Endothelial cell of umbilical vein (primary cell): ENCODE measurements at regions of chr11 and their contacts with region 1.

Region 1: DNA sequence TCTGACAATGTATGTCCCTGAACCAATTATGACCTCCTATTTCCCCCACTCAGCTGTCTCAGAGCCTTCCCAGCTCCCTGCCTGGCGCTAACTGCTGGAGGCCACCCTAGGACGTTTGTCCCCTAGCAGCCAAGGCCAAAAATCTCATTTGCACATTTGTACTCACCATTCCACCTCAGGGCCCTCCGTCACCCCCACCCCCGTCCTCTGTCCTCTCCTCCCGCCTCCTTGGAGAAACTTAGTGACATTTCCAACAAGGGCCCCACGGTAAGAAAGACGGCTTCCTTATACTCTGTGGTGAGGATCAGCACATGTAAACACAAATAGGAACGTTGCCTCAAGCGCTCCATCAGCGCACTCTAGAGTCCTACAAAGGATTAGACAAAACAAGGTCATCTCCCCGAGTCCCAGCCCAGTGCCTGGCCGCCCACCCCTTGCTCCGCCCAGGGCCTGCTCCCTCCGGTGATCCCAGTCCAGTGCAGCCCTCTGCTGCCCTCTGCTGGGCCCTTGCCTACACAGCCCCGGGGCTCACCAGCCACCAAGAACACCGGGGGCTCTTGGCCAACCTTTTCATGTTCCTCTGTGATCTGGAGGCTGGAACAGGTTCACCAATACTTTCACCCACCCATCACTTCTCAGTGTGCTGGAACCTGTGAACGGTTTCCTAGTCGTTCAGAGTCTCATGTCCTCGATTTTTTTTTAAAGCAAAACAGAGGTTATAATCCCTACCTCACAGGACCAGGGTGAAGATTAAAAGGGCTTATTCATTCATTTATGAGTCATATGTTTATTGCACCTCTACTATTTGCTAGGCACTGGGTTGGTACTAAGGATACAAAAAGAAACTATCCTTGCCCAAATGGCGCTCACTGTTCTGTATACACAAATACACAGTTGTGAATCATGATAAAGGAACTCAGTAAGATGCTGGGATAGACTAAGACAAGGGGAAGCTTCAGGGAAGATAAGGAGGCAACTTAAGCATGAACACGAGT is 15.3 kb upstream of the CTR9 start:
- DNase-seq: peak; percentile 92
- H3K4me3 ChIP-seq: no peak overlapping the region
- H3K27ac ChIP-seq: peak overlapping the region; percentile 41
- H3K4me1 ChIP-seq: peaks cover 10% of the 10 kb centered on the region
- H3K27me3 ChIP-seq: no peaks in the 10 kb centered on the region
- CTCF ChIP-seq: peak; percentile 98
- POLR2A ChIP-seq: no peak

Region 2: DNA sequence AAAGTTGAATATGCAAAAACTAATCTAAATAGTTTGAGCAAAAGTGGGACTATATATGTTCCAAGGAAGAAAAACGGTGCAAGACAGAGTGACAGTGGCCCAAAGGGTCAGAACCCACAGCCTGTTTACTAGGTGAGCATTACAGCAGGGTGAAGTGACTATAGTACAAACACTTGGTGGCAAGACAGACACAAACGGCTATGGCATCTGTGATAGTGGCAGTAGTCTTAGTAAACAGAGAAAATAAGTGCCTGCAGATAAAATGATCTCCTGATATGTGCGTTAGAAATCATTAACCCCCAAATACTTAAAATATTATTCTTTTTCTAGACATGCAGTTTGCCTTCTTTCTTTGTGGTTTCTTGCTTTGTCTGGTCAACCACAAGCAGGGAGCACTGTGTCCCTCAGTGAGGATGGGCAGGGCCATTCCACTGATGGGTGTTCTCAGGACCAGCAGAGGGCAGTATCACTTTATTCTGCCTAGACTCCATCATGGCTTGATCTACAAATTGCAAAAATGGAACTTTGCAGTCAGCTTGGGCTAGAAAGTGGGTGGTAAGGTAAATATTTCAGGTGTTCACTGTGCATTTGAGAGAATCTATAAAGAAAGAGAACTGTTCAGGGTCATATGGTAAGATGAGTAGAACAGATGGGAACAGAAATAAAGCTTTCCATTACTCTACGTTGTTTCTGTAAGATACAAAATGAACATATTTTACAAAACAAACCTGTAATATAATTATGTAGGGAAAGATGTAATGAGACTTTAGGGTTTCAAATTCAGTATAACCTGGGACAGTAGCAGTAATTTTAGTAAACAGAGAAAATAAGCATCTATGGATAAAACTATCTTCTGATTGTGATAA is 873.7 kb before region 1 on chr11:
- CTCF ChIA-PET with region 1: no interaction called
- POLR2A ChIA-PET with region 1: no interaction called
- dilution Hi-C with region 1: no loop called
- intact Hi-C with region 1: loop called (anchors 2 kb)
- DNase-seq: peak; percentile 74
- H3K4me3 ChIP-seq: no peak overlapping the region
- H3K27ac ChIP-seq: no peak overlapping the region
- H3K4me1 ChIP-seq: peaks cover 40% of the 10 kb centered on the region
- H3K27me3 ChIP-seq: no peaks in the 10 kb centered on the region
- CTCF ChIP-seq: peak; percentile 66 to 74
- POLR2A ChIP-seq: no peak

Region 3: DNA sequence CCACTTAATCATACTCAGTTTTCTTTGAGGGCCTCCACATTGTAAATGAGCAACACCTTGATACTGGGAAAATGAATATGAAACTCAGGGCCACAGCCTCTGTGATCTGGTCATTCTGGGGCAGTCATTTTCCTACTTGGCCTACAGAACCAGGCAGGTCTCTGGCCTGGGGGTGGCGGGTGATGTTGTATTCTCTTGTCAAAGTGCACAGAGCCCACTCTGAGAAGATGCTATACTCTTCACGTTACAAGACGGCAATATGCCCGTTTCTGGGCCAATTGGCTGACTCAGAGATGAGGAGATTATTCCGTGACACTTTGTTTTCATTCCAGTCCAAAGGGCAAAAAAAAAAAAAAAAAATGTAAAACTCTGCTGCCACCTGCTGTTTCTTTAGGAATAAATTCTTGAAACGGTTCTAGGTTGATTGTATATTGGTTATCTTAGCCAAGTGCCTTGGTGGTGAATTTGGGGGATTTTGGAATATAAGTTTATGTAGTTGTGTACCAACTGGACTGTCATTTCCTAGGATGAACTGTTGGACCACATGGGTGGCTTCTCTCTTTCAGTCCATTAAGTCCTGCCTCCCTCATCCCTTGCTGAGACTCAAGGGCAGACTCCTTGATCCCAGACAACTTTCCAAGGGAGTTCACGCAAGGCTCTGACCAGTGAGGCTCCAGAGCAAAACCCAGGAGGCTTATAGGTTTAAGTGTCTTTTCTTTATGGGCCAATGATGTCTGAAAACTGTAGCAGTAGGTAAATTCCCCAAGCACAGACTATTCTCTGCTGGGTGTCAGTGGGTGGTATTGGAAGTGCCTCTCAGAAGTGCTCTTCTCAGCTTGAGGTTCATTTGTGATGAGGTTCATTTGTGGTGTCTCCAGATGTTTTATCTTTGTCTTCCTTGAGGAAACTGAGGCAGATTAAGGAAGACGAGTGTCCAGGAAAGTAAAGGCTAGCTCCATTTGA is 412.7 kb before region 1 on chr11:
- CTCF ChIA-PET with region 1: interaction called, 6 read pairs
- POLR2A ChIA-PET with region 1: interaction called, 4 read pairs
- dilution Hi-C with region 1: no loop called
- intact Hi-C with region 1: loop called (anchors 1 kb)
- DNase-seq: peak; percentile 92
- H3K4me3 ChIP-seq: no peak overlapping the region
- H3K27ac ChIP-seq: peak overlapping the region; percentile 28
- H3K4me1 ChIP-seq: peaks cover 57% of the 10 kb centered on the region
- H3K27me3 ChIP-seq: no peaks in the 10 kb centered on the region
- CTCF ChIP-seq: peak; percentile 28 to 46
- POLR2A ChIP-seq: no peak

Region 4: GRCh38 chr11:10405855-10406592 is 329.8 kb before region 1 on chr11:
- CTCF ChIA-PET with region 1: interaction called, 39 read pairs
- POLR2A ChIA-PET with region 1: no interaction called
- dilution Hi-C with region 1: no loop called
- intact Hi-C with region 1: loop called (anchors 1 kb)
- DNase-seq: peak; percentile 89
- H3K4me3 ChIP-seq: no peak overlapping the region
- H3K27ac ChIP-seq: no peak overlapping the region
- H3K4me1 ChIP-seq: peaks cover 26% of the 10 kb centered on the region
- H3K27me3 ChIP-seq: no peaks in the 10 kb centered on the region
- CTCF ChIP-seq: peak; percentile 56 to 73
- POLR2A ChIP-seq: no peak

Region 5: DNA sequence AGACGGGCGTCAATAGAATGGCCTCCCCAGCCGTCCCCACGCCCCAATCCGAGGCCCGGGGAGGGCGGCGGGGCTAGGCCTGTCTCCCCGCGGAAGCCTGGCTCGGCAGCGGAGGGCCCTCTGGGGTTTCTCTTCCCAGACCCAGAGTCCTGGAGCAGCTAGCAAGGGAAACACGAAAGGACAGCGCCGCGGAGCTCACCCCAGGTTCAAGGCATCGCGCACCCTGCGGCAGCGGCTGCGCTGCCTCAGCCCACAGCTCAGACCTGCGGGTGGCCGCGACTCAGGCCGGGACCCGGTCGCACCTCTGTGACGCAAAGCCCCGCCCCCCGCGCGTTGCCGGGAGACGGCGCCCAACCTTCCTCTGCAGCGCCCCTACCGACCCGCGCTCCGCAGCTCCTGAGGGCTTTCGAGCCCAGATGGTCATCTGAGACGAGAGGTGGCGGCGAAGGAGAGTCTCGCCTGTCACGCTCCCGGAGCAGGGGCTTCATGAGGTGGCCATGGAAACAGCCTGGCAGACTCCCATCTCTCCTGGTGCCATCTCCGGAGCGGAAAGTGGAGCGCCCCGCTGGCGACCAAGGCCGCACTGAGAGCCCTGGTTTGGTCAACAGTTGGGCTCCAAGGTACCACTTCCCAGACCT is 194.7 kb before region 1 on chr11 and contains the start of gene RNF141:
- CTCF ChIA-PET with region 1: interaction called, 10 read pairs
- POLR2A ChIA-PET with region 1: no interaction called
- dilution Hi-C with region 1: no loop called
- intact Hi-C with region 1: no loop called
- DNase-seq: peak; percentile 94
- H3K4me3 ChIP-seq: peak within 1 kb of the TSS; percentile 37 to 83 (median 59)
- H3K27ac ChIP-seq: peak within 1 kb of the TSS; percentile 57
- H3K4me1 ChIP-seq: peaks cover 10% of the 10 kb centered on the region
- H3K27me3 ChIP-seq: no peaks in the 10 kb centered on the region
- CTCF ChIP-seq: peak; percentile 87 to 93
- POLR2A ChIP-seq: peak; percentile 94
- total RNA-seq, gene RNF141: 31.8 and 32.4 TPM in 2 replicates

Region 6: DNA sequence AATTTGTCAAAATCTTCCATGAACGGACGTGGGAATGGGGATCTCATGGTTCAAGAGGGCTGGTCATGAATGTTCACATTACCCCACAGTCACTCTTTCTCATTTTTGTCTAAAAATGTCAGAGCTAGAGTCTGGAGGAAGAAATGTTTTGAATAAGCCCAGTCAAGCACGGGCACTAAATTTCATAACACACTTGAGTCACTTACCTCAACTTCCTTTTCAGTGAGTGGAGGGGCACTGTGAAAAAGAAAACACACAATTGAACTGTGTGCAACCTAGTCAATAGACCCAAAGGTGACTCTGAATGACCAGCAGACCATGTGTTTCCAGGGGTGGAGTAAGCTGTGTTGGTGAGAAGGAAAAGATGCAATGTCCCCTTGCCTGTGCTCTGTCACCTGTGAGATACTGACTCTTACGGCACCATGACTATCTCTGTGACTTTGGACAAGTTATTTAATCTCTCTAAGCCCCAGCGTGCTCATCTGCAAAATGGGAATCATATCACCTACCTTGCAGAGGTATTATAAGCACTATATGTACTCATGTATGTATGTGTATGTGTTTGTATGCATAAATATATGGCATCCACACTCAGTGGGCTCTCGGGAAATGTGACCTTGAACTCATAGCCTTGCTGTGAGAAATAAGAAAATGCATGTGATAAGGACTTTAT is 129.1 kb before region 1 on chr11:
- CTCF ChIA-PET with region 1: no interaction called
- POLR2A ChIA-PET with region 1: no interaction called
- dilution Hi-C with region 1: no loop called
- intact Hi-C with region 1: no loop called
- DNase-seq: peak; percentile 79
- H3K4me3 ChIP-seq: no peak overlapping the region
- H3K27ac ChIP-seq: peak overlapping the region; percentile 25
- H3K4me1 ChIP-seq: peaks cover 29% of the 10 kb centered on the region
- H3K27me3 ChIP-seq: peaks cover 0 to 1% of the 10 kb centered on the region in 2 experiments
- CTCF ChIP-seq: no peak
- POLR2A ChIP-seq: no peak

Region 7: GRCh38 chr11:10659339-10660216 is 76.2 kb before region 1 on chr11:
- CTCF ChIA-PET with region 1: interaction called, 3 read pairs
- POLR2A ChIA-PET with region 1: no interaction called
- dilution Hi-C with region 1: no loop called
- intact Hi-C with region 1: loop called (anchors 1 kb)
- DNase-seq: peak; percentile 90
- H3K4me3 ChIP-seq: no peak overlapping the region
- H3K27ac ChIP-seq: peak overlapping the region; percentile 67
- H3K4me1 ChIP-seq: peaks cover 34% of the 10 kb centered on the region
- H3K27me3 ChIP-seq: no peaks in the 10 kb centered on the region
- CTCF ChIP-seq: no peak
- POLR2A ChIP-seq: no peak

Region 8: DNA sequence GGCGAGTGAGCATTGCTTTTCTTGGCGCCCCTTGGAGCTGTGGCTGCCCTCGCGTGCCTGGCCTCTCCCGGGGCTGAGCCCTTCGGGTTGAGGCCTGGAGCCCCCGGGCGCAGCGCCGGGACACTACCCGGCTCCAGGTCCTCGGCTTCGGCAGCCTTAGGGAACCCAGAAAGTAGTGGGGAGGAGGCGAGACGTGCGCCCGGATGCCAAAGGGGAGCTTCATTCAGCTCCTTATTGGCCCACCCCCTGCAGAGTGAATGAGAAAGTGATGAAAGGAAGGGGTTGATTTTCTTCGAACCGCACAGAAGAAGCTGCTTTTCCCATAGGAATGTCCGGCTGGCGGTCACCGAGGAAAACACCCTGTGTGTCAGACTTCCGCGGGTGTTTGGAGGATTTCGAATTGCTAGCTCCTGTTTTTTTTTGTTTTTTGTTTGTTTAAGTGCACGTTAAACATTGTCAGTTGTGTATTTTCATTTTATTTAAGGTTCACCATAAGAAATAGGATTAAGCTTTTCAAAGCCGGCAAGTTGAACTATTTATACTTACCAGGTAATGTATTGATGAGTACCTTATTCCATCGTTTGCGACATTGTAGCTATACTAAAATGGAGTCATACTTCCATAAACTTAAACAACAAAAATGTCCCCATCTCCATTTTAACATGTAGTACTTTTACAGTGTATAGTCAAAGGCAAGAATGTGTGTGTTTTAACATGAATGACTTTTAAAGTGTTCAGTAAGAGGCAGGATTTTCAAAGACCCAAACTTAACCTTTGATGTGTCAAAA is 73.8 kb after region 1 on chr11:
- CTCF ChIA-PET with region 1: no interaction called
- POLR2A ChIA-PET with region 1: no interaction called
- dilution Hi-C with region 1: no loop called
- intact Hi-C with region 1: no loop called
- DNase-seq: peak; percentile 80
- H3K4me3 ChIP-seq: peak overlapping the region; percentile 3 to 97 (median 47)
- H3K27ac ChIP-seq: peak overlapping the region; percentile 83
- H3K4me1 ChIP-seq: peaks cover 31% of the 10 kb centered on the region
- H3K27me3 ChIP-seq: no peaks in the 10 kb centered on the region
- CTCF ChIP-seq: no peak
- POLR2A ChIP-seq: no peak